ENCODE measurements at regions of chr10 and their contacts with region 1.

Region 1: GRCh38 chr10:80078448-80079311 is at the start of gene TMEM254:
- DNase-seq: peak; percentile 91 to 96 (median 95)
- H3K4me3 ChIP-seq: peak within 1 kb of the TSS; percentile 74 to 93 (median 87)
- H3K27ac ChIP-seq: peak within 1 kb of the TSS; percentile 90 to 95
- H3K4me1 ChIP-seq: peaks cover 0 to 17% (median 11%) of the 10 kb centered on the region in 4 experiments
- H3K27me3 ChIP-seq: no peaks in the 10 kb centered on the region

Region 2: DNA sequence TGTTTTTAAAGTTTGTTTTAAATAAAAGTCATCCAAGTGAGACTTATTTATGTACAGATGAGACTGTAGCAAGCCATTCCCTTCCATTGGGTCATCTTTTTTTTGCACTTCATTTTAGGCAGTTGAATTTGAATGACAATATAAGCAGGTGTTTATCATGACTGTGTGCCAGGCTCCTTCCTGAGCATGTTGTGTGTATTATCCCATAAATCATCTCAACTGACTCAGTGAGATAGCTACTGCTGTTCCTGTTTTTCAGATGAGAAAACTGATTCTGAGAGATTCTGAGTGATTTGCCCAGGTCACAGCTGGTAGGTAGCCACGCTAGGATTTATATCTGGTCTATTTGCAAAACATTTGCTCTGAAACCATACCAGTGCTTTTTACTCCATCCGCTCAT is 11.4 kb after region 1 on chr10:
- CTCF ChIA-PET with region 1: interaction called, 13 read pairs
- POLR2A ChIA-PET with region 1: no interaction called
- DNase-seq: peak; percentile 62 to 95 (median 92)
- H3K4me3 ChIP-seq: no peak overlapping the region
- H3K27ac ChIP-seq: peak overlapping the region in 1 of 2 experiments; percentile 39
- H3K4me1 ChIP-seq: peaks cover 3 to 29% (median 14%) of the 10 kb centered on the region in 4 experiments
- H3K27me3 ChIP-seq: no peaks in the 10 kb centered on the region